Naive thymus-derived CD8-positive, alpha-beta T cell (primary cell): ENCODE measurements at regions of chr17 and their contacts with region 1.

Region 1: GRCh38 chr17:4709794-4710692 is at the start of gene ARRB2:
- DNase-seq: peak; percentile 93 to 99 (median 99)
- ATAC-seq: peak; percentile 79
- H3K4me3 Mint-ChIP-seq: peak within 1 kb of the TSS; percentile 74 to 99 (median 97)
- H3K27ac Mint-ChIP-seq: peak within 1 kb of the TSS; percentile 91 to 99 (median 98)
- H3K4me1 Mint-ChIP-seq: peaks cover 30 to 60% (median 54%) of the 10 kb centered on the region in 4 donors
- H3K27me3 Mint-ChIP-seq: no peaks in the 10 kb centered on the region
- polyA plus RNA-seq, gene ARRB2: 47.0 to 60.5 (median 49.4) TPM

Region 2: GRCh38 chr17:4733073-4733531 is 23.1 kb after region 1 on chr17:
- POLR2A ChIA-PET with region 1: interaction called, 39 read pairs
- DNase-seq: no peak
- ATAC-seq: no peak
- H3K4me3 Mint-ChIP-seq: peak overlapping the region in 4 of 10 donors; percentile 27 to 74 (median 40)
- H3K27ac Mint-ChIP-seq: peak overlapping the region in 6 of 10 donors; percentile 22 to 87 (median 71)
- H3K4me1 Mint-ChIP-seq: peaks cover 14 to 55% (median 24%) of the 10 kb centered on the region in 4 donors
- H3K27me3 Mint-ChIP-seq: peaks cover 0 to 2% (median 0%) of the 10 kb centered on the region in 5 donors

Region 3: DNA sequence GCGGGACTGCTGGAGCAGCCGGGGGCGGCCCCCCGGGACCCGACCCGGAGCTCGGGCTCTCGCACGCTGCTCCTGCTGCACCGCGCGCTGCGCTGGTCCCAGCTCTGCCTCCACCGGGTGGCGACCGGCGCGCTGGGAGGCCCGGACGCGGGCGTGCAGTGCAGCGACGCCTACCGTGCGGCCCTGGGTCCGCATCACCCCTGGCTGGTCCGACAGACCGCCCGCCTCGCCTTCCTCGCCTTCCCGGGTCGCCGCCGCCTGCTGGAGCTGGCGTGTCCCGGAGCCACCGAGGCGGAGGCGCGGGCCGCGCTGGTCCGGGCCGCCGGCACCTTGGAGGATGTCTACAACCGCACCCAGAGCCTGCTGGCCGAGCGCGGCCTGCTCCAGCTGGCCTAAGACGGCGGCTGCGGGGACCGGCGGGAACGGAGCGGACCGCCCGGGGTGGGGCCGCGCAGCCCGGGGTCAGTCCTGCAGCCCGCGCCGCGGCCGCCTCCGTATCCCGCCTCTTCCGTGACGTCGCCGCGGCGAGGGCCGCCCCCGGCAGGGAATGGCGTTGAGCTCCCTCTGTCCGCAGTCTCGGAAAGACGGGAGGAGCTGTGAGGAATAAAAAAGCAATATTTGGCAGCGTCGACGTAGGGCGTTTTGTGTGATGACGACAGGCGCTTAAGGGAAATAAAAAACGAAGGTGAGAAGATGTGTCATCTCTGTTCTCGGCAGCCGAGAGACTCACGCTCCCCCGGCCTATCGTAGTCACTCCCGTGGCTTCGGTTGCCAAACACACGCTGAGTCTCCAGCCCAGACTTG is 80.1 kb after region 1 on chr17:
- POLR2A ChIA-PET with region 1: interaction called, 45 read pairs
- DNase-seq: peak; percentile 60 to 83 (median 73)
- ATAC-seq: peak; percentile 92
- H3K4me3 Mint-ChIP-seq: peak overlapping the region; percentile 68 to 95 (median 90)
- H3K27ac Mint-ChIP-seq: peak overlapping the region; percentile 57 to 93 (median 84)
- H3K4me1 Mint-ChIP-seq: peaks cover 10 to 40% (median 33%) of the 10 kb centered on the region in 4 donors
- H3K27me3 Mint-ChIP-seq: peaks cover 12 to 34% (median 27%) of the 10 kb centered on the region in 5 donors

Region 4: DNA sequence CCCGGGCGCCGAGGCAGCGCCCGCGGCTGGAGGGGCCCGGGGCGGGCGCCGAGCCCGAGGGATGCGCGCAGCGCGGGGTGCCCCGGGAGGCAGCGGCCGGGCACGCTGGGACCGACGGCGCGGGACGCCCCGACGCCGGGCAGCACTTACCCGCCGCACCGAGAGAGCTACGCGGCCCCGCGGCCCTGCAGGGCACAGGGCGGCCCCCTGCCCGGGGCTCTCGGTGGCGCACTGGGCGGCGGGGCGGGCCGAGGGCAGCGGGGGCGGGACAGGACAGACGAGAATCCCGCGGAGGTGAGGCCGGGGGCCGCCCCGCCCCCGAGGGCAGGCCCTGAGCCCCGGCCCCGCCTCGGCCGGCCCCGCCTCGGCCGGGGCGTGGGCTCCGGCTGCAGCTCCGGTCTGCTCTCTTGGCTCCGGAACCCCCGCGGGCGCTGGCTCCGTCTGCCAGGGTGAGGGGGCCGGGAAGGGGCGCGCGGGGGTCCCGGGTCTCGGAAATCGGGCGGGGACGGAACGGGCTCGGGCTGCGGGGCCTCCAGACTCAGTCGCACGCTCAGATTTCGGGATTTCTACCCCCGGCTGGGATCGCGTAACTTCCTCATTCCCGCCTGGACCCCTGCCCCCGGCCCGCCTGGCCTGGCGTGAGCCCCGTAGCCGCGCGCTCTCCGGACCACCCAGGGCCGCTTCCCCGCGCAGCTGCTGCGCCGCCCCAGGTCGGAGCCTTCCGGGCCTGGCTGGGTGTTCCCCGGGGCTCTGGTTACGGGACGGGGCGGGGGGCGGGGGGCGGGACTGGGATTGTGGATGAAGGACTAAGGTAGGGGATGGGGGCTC is 96.9 kb after region 1 on chr17 and contains the start of gene PLD2:
- POLR2A ChIA-PET with region 1: interaction called, 14 read pairs
- DNase-seq: peak; percentile 74 to 91 (median 80)
- ATAC-seq: peak; percentile 95 to 97
- H3K4me3 Mint-ChIP-seq: peak within 1 kb of the TSS; percentile 60 to 90 (median 80)
- H3K27ac Mint-ChIP-seq: peak within 1 kb of the TSS in 5 of 10 donors; percentile 52 to 78 (median 74)
- H3K4me1 Mint-ChIP-seq: peaks cover 0 to 22% (median 8%) of the 10 kb centered on the region in 4 donors
- H3K27me3 Mint-ChIP-seq: no peaks in the 10 kb centered on the region
- polyA plus RNA-seq, gene PLD2: 1.1 to 1.9 (median 1.9) TPM

Region 5: GRCh38 chr17:4939796-4940624 is 230.0 kb after region 1 on chr17 and contains the starts of genes RNF167 and SLC25A11:
- POLR2A ChIA-PET with region 1: interaction called, 13 read pairs
- DNase-seq: peak; percentile 90 to 99 (median 96)
- ATAC-seq: peak; percentile 85 to 88
- H3K4me3 Mint-ChIP-seq: peak within 1 kb of the TSS; percentile 91 to 100 (median 96)
- H3K27ac Mint-ChIP-seq: peak within 1 kb of the TSS; percentile 93 to 99 (median 98)
- H3K4me1 Mint-ChIP-seq: peaks cover 44 to 82% (median 72%) of the 10 kb centered on the region in 4 donors
- H3K27me3 Mint-ChIP-seq: no peaks in the 10 kb centered on the region
- polyA plus RNA-seq, gene RNF167: 30.3 to 50.0 (median 32.2) TPM
- polyA plus RNA-seq, gene SLC25A11: 75.3 to 78.6 (median 77.6) TPM